T-cell (primary cell): ENCODE measurements at regions of chr11 and their contacts with region 1.

Region 1: DNA sequence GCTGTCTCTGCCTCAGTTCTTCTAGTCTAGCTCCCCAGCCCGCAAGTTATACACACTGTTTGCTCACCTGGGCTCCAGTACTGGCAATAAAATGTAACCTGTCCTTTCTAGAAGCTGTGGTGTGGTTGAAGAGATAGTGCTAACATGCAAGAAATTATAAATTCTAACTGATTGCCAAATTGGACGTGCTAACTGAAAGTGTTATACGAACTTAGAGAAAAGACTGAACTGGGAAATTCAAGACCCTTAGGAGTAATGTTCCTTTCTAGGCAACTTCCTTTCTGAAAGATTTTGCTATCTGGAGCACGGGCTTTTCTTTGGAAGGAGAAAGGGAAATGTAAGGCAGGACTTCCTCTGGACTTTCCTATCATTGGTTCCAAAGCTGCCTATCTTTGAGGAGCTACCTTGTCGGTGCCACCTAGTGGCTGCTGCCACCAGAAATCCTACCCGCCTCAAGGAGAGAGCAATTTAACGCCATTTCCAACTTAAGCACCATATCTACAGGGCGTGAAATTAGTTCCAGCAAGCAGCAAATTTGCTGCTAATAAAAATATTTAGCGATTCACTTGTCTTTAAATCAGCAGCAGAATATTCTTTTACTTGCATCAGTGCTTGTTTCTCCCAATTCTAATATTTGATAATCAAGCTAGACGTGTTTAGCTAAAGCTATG is 12.7 kb upstream of the TMEM218 start:
- DNase-seq: peak in 16 of 35 experiments; percentile 12 to 55 (median 25)
- ATAC-seq: peak in 3 of 4 experiments; percentile 56 to 75 (median 63)
- H3K4me3 ChIP-seq: no peak overlapping the region
- H3K4me3 Mint-ChIP-seq: no peak overlapping the region
- H3K27ac ChIP-seq: no peak overlapping the region
- H3K27ac Mint-ChIP-seq: no peak overlapping the region
- H3K4me1 ChIP-seq: peaks cover 0 to 2% of the 10 kb centered on the region in 2 experiments
- H3K4me1 Mint-ChIP-seq: peaks cover 0 to 6% (median 4%) of the 10 kb centered on the region in 3 donors
- H3K27me3 ChIP-seq: peaks cover 0 to 9% of the 10 kb centered on the region in 2 experiments
- H3K27me3 Mint-ChIP-seq: peaks cover 28 to 32% of the 10 kb centered on the region in 2 donors

Region 2: GRCh38 chr11:124950601-124951330 is 173.3 kb before region 1 on chr11:
- CTCF ChIA-PET with region 1: no interaction called
- POLR2A ChIA-PET with region 1: no interaction called
- DNase-seq: peak in 17 of 35 experiments; percentile 2 to 52 (median 16)
- ATAC-seq: peak; percentile 21 to 60 (median 46)
- H3K4me3 ChIP-seq: no peak overlapping the region
- H3K4me3 Mint-ChIP-seq: no peak overlapping the region
- H3K27ac ChIP-seq: peak overlapping the region; percentile 68
- H3K27ac Mint-ChIP-seq: no peak overlapping the region
- H3K4me1 ChIP-seq: peaks cover 24 to 40% of the 10 kb centered on the region in 2 experiments
- H3K4me1 Mint-ChIP-seq: peaks cover 5 to 11% (median 10%) of the 10 kb centered on the region in 3 donors
- H3K27me3 ChIP-seq: no peaks in the 10 kb centered on the region
- H3K27me3 Mint-ChIP-seq: no peaks in the 10 kb centered on the region

Region 3: GRCh38 chr11:125111343-125112207 is 12.5 kb before region 1 on chr11 and contains the start of gene TMEM218:
- CTCF ChIA-PET with region 1: interaction called, 3 to 24 read pairs
- POLR2A ChIA-PET with region 1: no interaction called
- DNase-seq: peak; percentile 85 to 98 (median 92)
- ATAC-seq: peak; percentile 95 to 97 (median 96)
- H3K4me3 ChIP-seq: peak within 1 kb of the TSS; percentile 83 to 89
- H3K4me3 Mint-ChIP-seq: peak within 1 kb of the TSS; percentile 94 to 97 (median 96)
- H3K27ac ChIP-seq: peak within 1 kb of the TSS; percentile 67
- H3K27ac Mint-ChIP-seq: peak within 1 kb of the TSS; percentile 89 to 94
- H3K4me1 ChIP-seq: peaks cover 6 to 14% of the 10 kb centered on the region in 2 experiments
- H3K4me1 Mint-ChIP-seq: peaks cover 19 to 29% (median 26%) of the 10 kb centered on the region in 3 donors
- H3K27me3 ChIP-seq: no peaks in the 10 kb centered on the region
- H3K27me3 Mint-ChIP-seq: no peaks in the 10 kb centered on the region
- total RNA-seq, gene TMEM218: 10.3 to 18.9 (median 14.8) TPM

Region 4: DNA sequence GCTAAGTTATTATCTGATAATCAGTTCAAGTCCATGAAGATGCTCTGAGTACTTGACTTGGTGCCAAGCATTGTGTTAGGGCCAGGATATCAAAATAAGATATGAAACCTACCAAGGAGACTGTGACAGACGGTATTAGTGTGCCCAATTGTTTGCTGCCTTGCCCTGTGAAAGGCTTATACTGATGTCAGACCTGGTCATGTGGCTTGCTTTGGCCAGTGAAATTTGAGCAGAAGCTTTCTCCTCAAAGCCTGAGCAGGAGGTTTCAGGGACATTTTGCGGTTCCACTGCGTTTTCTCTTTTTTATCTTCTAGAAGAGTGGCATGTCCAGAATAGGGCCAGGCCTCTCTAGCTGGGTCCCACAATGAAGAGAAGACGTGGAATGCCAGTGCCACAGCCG is 24.7 kb after region 1 on chr11:
- CTCF ChIA-PET with region 1: no interaction called
- POLR2A ChIA-PET with region 1: no interaction called
- DNase-seq: no peak
- ATAC-seq: no peak
- H3K4me3 ChIP-seq: no peak overlapping the region
- H3K4me3 Mint-ChIP-seq: no peak overlapping the region
- H3K27ac ChIP-seq: no peak overlapping the region
- H3K27ac Mint-ChIP-seq: no peak overlapping the region
- H3K4me1 ChIP-seq: no peaks in the 10 kb centered on the region
- H3K4me1 Mint-ChIP-seq: no peaks in the 10 kb centered on the region
- H3K27me3 ChIP-seq: peaks cover 10 to 25% of the 10 kb centered on the region in 2 experiments
- H3K27me3 Mint-ChIP-seq: peaks cover 10 to 20% of the 10 kb centered on the region in 2 donors